ENCODE measurements at regions of chr11 and their contacts with region 1.

Region 1: DNA sequence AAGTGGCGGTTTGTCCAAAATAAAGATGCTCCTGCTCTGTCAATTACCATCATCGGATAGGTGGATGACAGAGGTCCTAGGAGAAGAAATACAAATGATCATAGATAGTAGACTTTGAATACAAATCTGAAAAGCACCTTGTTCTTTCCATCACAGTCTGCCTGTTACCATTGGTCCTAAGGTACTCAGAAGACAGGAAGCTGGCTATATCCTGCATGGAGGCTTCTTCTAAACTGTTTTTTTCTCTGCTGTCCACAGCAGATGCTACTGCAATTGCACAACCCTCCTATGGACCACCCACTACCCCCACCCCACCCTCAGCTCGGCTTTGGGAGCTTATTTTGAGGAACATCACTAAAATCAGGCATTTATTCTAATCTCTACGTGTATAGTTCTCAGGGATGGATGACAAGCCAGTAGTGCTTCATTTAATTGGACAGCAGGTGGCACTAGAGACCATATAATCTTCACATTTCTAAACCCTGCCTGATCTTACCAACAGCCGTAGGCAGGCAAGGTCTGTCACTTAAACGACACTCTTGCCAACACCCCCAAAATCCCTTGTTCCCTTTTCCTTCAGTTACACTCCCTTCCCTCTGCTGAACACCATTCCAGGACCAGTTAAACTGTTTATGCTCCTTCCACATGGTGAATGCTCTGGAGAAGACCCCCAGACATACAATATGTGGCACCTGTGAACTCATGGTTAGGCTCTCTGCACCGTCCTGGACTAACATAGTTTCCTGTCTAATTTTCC is 6.6 kb upstream of the PTS start:
- DNase-seq: peak in 8 of 9 experiments; percentile 6 to 88 (median 44)
- ATAC-seq: peak; percentile 99
- H3K4me3 ChIP-seq: no peak overlapping the region
- H3K4me3 Mint-ChIP-seq: no peak overlapping the region
- H3K27ac ChIP-seq: no peak overlapping the region
- H3K27ac Mint-ChIP-seq: no peak overlapping the region
- H3K4me1 ChIP-seq: no peaks in the 10 kb centered on the region
- H3K4me1 Mint-ChIP-seq: peaks cover 4% of the 10 kb centered on the region
- H3K27me3 ChIP-seq: no peaks in the 10 kb centered on the region
- H3K27me3 Mint-ChIP-seq: no peaks in the 10 kb centered on the region
- CTCF ChIP-seq: peak; percentile 63

Region 2: GRCh38 chr11:111766093-111766833 is 453.4 kb before region 1 on chr11 and contains the start of gene PPP2R1B:
- CTCF ChIA-PET with region 1: no interaction called
- POLR2A ChIA-PET with region 1: no interaction called
- intact Hi-C with region 1: loop called in 1 of 2 experiments (anchors 10 kb)
- DNase-seq: peak; percentile 33 to 83 (median 73)
- ATAC-seq: peak; percentile 98
- H3K4me3 ChIP-seq: peak within 1 kb of the TSS; percentile 86 to 97
- H3K4me3 Mint-ChIP-seq: peak within 1 kb of the TSS; percentile 99
- H3K27ac ChIP-seq: peak within 1 kb of the TSS; percentile 63 to 67
- H3K27ac Mint-ChIP-seq: peak within 1 kb of the TSS; percentile 97
- H3K4me1 ChIP-seq: peaks cover 12% of the 10 kb centered on the region
- H3K4me1 Mint-ChIP-seq: peaks cover 39% of the 10 kb centered on the region
- H3K27me3 ChIP-seq: no peaks in the 10 kb centered on the region
- H3K27me3 Mint-ChIP-seq: no peaks in the 10 kb centered on the region
- CTCF ChIP-seq: no peak
- total RNA-seq, gene PPP2R1B: 47.4 to 53.8 TPM

Region 3: GRCh38 chr11:112280268-112281126 is 60.8 kb after region 1 on chr11:
- CTCF ChIA-PET with region 1: interaction called, 481 read pairs
- POLR2A ChIA-PET with region 1: interaction called, 6 read pairs
- intact Hi-C with region 1: loop called (anchors 1 kb)
- DNase-seq: peak; percentile 24 to 90 (median 67)
- ATAC-seq: peak; percentile 93
- H3K4me3 ChIP-seq: peak overlapping the region; percentile 60 to 79
- H3K4me3 Mint-ChIP-seq: peak overlapping the region; percentile 92
- H3K27ac ChIP-seq: peak overlapping the region in 1 of 2 experiments; percentile 28
- H3K27ac Mint-ChIP-seq: peak overlapping the region; percentile 77
- H3K4me1 ChIP-seq: no peaks in the 10 kb centered on the region
- H3K4me1 Mint-ChIP-seq: peaks cover 8% of the 10 kb centered on the region
- H3K27me3 ChIP-seq: no peaks in the 10 kb centered on the region
- H3K27me3 Mint-ChIP-seq: no peaks in the 10 kb centered on the region
- CTCF ChIP-seq: peak; percentile 44

Region 4: GRCh38 chr11:112555491-112556364 is 336.1 kb after region 1 on chr11:
- CTCF ChIA-PET with region 1: interaction called, 19 read pairs
- POLR2A ChIA-PET with region 1: no interaction called
- intact Hi-C with region 1: loop called in 1 of 2 experiments (anchors 1 kb)
- DNase-seq: peak; percentile 32 to 74 (median 62)
- ATAC-seq: peak; percentile 62
- H3K4me3 ChIP-seq: no peak overlapping the region
- H3K4me3 Mint-ChIP-seq: no peak overlapping the region
- H3K27ac ChIP-seq: no peak overlapping the region
- H3K27ac Mint-ChIP-seq: no peak overlapping the region
- H3K4me1 ChIP-seq: no peaks in the 10 kb centered on the region
- H3K4me1 Mint-ChIP-seq: no peaks in the 10 kb centered on the region
- H3K27me3 ChIP-seq: no peaks in the 10 kb centered on the region
- H3K27me3 Mint-ChIP-seq: peaks cover 9% of the 10 kb centered on the region
- CTCF ChIP-seq: peak; percentile 52

Region 5: GRCh38 chr11:113289431-113290187 is 1070.0 kb after region 1 on chr11:
- CTCF ChIA-PET with region 1: interaction called, 6 read pairs
- POLR2A ChIA-PET with region 1: interaction called, 3 read pairs
- intact Hi-C with region 1: loop called in 1 of 2 experiments (anchors 1 kb)
- DNase-seq: peak; percentile 24 to 74 (median 54)
- ATAC-seq: peak; percentile 85
- H3K4me3 ChIP-seq: no peak overlapping the region
- H3K4me3 Mint-ChIP-seq: no peak overlapping the region
- H3K27ac ChIP-seq: no peak overlapping the region
- H3K27ac Mint-ChIP-seq: no peak overlapping the region
- H3K4me1 ChIP-seq: no peaks in the 10 kb centered on the region
- H3K4me1 Mint-ChIP-seq: no peaks in the 10 kb centered on the region
- H3K27me3 ChIP-seq: no peaks in the 10 kb centered on the region
- H3K27me3 Mint-ChIP-seq: peaks cover 24% of the 10 kb centered on the region
- CTCF ChIP-seq: peak; percentile 64

Region 6: GRCh38 chr11:113532697-113533424 is 1313.2 kb after region 1 on chr11:
- CTCF ChIA-PET with region 1: interaction called, 3 read pairs
- POLR2A ChIA-PET with region 1: no interaction called
- intact Hi-C with region 1: loop called in 1 of 2 experiments (anchors 5 kb)
- DNase-seq: peak; percentile 5 to 68 (median 59)
- ATAC-seq: no peak
- H3K4me3 ChIP-seq: no peak overlapping the region
- H3K4me3 Mint-ChIP-seq: no peak overlapping the region
- H3K27ac ChIP-seq: no peak overlapping the region
- H3K27ac Mint-ChIP-seq: no peak overlapping the region
- H3K4me1 ChIP-seq: no peaks in the 10 kb centered on the region
- H3K4me1 Mint-ChIP-seq: peaks cover 4% of the 10 kb centered on the region
- H3K27me3 ChIP-seq: no peaks in the 10 kb centered on the region
- H3K27me3 Mint-ChIP-seq: peaks cover 17% of the 10 kb centered on the region
- CTCF ChIP-seq: peak; percentile 48

Region 7: GRCh38 chr11:113875234-113876073 is 1655.8 kb after region 1 on chr11 and contains the start of gene USP28:
- CTCF ChIA-PET with region 1: no interaction called
- POLR2A ChIA-PET with region 1: no interaction called
- intact Hi-C with region 1: loop called in 1 of 2 experiments (anchors 10 kb)
- DNase-seq: peak; percentile 45 to 90 (median 76)
- ATAC-seq: peak; percentile 85
- H3K4me3 ChIP-seq: peak within 1 kb of the TSS; percentile 80 to 95
- H3K4me3 Mint-ChIP-seq: peak within 1 kb of the TSS; percentile 96
- H3K27ac ChIP-seq: peak within 1 kb of the TSS; percentile 52 to 88
- H3K27ac Mint-ChIP-seq: peak within 1 kb of the TSS; percentile 97
- H3K4me1 ChIP-seq: peaks cover 11% of the 10 kb centered on the region
- H3K4me1 Mint-ChIP-seq: peaks cover 48% of the 10 kb centered on the region
- H3K27me3 ChIP-seq: no peaks in the 10 kb centered on the region
- H3K27me3 Mint-ChIP-seq: no peaks in the 10 kb centered on the region
- CTCF ChIP-seq: no peak
- total RNA-seq, gene USP28: 6.4 to 6.8 TPM